ENCODE measurements at regions of chr12 and their contacts with region 1.

Region 1: GRCh38 chr12:92570056-92570753 is 132.6 kb upstream of the PLEKHG7 start:
- DNase-seq: peak; percentile 93
- ATAC-seq: peak; percentile 94
- H3K4me3 ChIP-seq: no peak overlapping the region
- H3K27ac ChIP-seq: peak overlapping the region; percentile 55
- H3K4me1 ChIP-seq: peaks cover 11% of the 10 kb centered on the region; the same call in 1 of the 2 replicates
- H3K27me3 ChIP-seq: no peaks in the 10 kb centered on the region
- CTCF ChIP-seq: peak; percentile 47 to 76 (median 48); a peak in 5 of 6 replicates
- EP300 ChIP-seq: no peak
- POLR2A ChIP-seq: no peak
- RAD21 ChIP-seq: peak; percentile 81

Region 2: GRCh38 chr12:91388552-91388965 is 1181.6 kb before region 1 on chr12:
- CTCF ChIA-PET with region 1: interaction called, 8 read pairs
- POLR2A ChIA-PET with region 1: no interaction called
- RAD21 ChIA-PET with region 1: interaction called, 3 read pairs
- SMC1A ChIA-PET with region 1: interaction called, 3 read pairs
- in situ Hi-C with region 1: loop called (anchors 5 kb)
- intact Hi-C with region 1: no loop called
- DNase-seq: no peak
- ATAC-seq: no peak
- H3K4me3 ChIP-seq: no peak overlapping the region
- H3K27ac ChIP-seq: no peak overlapping the region
- H3K4me1 ChIP-seq: no peaks in the 10 kb centered on the region
- H3K27me3 ChIP-seq: no peaks in the 10 kb centered on the region
- CTCF ChIP-seq: no peak
- EP300 ChIP-seq: no peak
- POLR2A ChIP-seq: no peak
- RAD21 ChIP-seq: no peak

Region 3: GRCh38 chr12:91991399-91992187 is 578.6 kb before region 1 on chr12:
- CTCF ChIA-PET with region 1: interaction called, 18 read pairs
- POLR2A ChIA-PET with region 1: interaction called, 3 read pairs
- RAD21 ChIA-PET with region 1: interaction called, 24 read pairs
- SMC1A ChIA-PET with region 1: interaction called, 7 read pairs
- in situ Hi-C with region 1: no loop called
- intact Hi-C with region 1: loop called (anchors 1 kb)
- DNase-seq: peak; percentile 32
- ATAC-seq: peak; percentile 94
- H3K4me3 ChIP-seq: no peak overlapping the region
- H3K27ac ChIP-seq: no peak overlapping the region
- H3K4me1 ChIP-seq: no peaks in the 10 kb centered on the region
- H3K27me3 ChIP-seq: no peaks in the 10 kb centered on the region
- CTCF ChIP-seq: peak in 2 of 3 experiments; percentile 35 to 56; a peak in 3 of 6 replicates
- EP300 ChIP-seq: no peak
- POLR2A ChIP-seq: no peak
- RAD21 ChIP-seq: peak; percentile 61

Region 4: DNA sequence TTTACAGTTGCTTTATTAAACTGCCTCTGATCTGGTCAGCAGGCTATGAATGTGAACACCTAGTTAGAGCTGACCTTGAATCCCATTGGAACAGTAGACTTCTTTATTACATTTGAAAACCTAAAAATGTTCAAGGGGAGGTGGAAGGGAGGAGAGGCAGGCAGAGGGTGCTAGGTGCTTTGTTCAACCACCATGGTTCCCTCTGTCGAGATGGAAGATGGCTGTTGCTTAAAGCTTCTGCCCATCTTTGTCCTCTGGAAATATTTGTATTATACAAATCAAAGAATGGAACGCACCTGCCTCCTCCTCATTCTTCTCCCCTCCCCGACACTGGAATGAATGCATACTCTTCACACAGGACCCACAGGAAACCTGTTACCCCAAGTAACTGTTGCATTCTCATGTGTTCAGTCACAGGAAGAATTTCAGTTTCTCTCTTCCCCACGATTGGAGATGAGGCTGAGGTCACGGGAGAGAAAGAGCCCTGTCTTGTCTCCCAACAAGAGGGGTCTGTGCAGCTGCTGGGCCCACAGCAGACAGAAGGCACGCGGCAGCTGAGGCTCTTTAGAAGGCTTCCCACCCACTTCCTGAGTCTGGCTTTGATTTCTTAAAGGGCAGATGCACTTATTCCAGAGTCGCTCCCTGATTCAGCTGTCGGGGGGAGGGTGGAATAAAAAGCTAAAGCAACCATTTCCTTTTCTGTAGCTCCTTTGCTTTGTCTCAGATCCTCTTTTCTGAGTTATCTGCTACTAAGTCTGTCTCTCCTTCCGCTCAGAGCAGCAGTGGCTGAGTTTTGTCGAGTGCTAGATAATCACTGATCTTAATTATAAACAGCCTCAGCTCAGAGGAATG is 206.7 kb before region 1 on chr12:
- CTCF ChIA-PET with region 1: interaction called, 4 read pairs
- POLR2A ChIA-PET with region 1: interaction called, 12 read pairs
- RAD21 ChIA-PET with region 1: interaction called, 27 read pairs
- SMC1A ChIA-PET with region 1: interaction called, 25 read pairs
- in situ Hi-C with region 1: no loop called
- intact Hi-C with region 1: loop called (anchors 1 kb)
- DNase-seq: peak; percentile 96
- ATAC-seq: peak; percentile 82
- H3K4me3 ChIP-seq: peak overlapping the region; percentile 62
- H3K27ac ChIP-seq: peak overlapping the region; percentile 99
- H3K4me1 ChIP-seq: peaks cover 17% of the 10 kb centered on the region; the same call in 1 of the 2 replicates
- H3K27me3 ChIP-seq: no peaks in the 10 kb centered on the region
- CTCF ChIP-seq: no peak
- EP300 ChIP-seq: peak; percentile 60 to 79; a peak in 3 of 4 replicates
- POLR2A ChIP-seq: peak; percentile 83
- RAD21 ChIP-seq: peak; percentile 12; the same call in 1 of the 2 replicates

Region 5: DNA sequence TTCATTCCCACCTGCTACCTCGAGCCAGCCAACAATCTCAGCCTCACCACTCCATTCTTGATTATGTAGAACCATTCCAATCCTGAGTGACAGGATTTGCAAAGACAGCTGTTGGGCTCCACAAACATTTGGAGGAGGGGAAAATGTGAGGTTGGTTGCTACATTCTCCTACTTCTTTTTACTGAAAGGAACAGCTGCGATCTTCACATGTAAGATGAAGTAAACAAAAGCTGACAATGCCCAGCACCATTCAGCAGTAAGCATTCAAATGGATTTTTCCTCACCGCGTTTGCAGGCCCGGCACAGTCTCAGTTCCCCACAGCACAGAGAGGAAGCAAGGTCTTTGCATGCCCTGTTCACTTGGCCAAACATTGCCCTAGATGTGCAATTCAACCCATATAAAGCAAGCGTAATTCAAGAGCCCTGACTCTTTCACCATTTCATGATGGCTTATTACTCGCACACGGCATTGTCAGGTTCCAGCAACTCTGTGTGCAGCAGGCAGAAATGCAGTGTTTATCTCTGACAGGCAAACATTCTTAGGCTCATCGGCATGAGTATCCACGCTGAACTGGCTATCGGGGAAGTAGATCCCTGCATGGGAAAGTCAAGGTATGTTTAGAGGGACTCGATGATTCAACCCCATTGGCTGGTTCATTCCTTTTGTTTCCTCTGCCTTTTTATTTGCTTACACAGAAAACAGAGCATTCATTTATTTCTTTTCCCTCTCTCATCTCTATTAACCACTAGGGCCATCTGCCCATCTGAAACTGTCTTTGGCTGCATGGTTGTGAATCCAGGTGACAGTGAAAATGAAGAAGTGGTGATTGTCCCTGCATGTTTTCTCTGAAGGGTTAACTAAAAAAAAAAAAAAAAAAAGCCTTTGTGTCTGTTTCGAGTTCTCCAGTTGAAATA is 103.6 kb before region 1 on chr12:
- CTCF ChIA-PET with region 1: interaction called, 10 read pairs
- POLR2A ChIA-PET with region 1: interaction called, 6 read pairs
- RAD21 ChIA-PET with region 1: interaction called, 38 read pairs
- SMC1A ChIA-PET with region 1: interaction called, 32 read pairs
- in situ Hi-C with region 1: loop called (anchors 25 kb)
- intact Hi-C with region 1: loop called (anchors 1 kb)
- DNase-seq: peak; percentile 90
- ATAC-seq: peak; percentile 39
- H3K4me3 ChIP-seq: peak overlapping the region; percentile 82
- H3K27ac ChIP-seq: peak overlapping the region; percentile 99
- H3K4me1 ChIP-seq: peaks cover 62% of the 10 kb centered on the region
- H3K27me3 ChIP-seq: no peaks in the 10 kb centered on the region
- CTCF ChIP-seq: no peak
- EP300 ChIP-seq: peak; percentile 65 to 70; a peak in 3 of 4 replicates
- POLR2A ChIP-seq: peak; percentile 85
- RAD21 ChIP-seq: peak; percentile 5

Region 6: GRCh38 chr12:92539113-92539749 is 31.0 kb before region 1 on chr12:
- CTCF ChIA-PET with region 1: interaction called, 5 read pairs
- POLR2A ChIA-PET with region 1: interaction called, 204 read pairs
- RAD21 ChIA-PET with region 1: interaction called, 269 read pairs
- SMC1A ChIA-PET with region 1: interaction called, 319 read pairs
- in situ Hi-C with region 1: no loop called
- intact Hi-C with region 1: no loop called
- DNase-seq: peak; percentile 93
- ATAC-seq: peak; percentile 54
- H3K4me3 ChIP-seq: no peak overlapping the region
- H3K27ac ChIP-seq: peak overlapping the region; percentile 99
- H3K4me1 ChIP-seq: peaks cover 72% of the 10 kb centered on the region
- H3K27me3 ChIP-seq: no peaks in the 10 kb centered on the region
- CTCF ChIP-seq: no peak
- EP300 ChIP-seq: peak; percentile 90 to 98
- POLR2A ChIP-seq: no peak
- RAD21 ChIP-seq: 0 out of 2 replicates have a peak, but pooled peaks have one; percentile 36

Region 7: GRCh38 chr12:92593734-92594402 is 23.7 kb after region 1 on chr12:
- CTCF ChIA-PET with region 1: interaction called, 11 read pairs
- POLR2A ChIA-PET with region 1: interaction called, 4 read pairs
- RAD21 ChIA-PET with region 1: interaction called, 4 read pairs
- SMC1A ChIA-PET with region 1: interaction called, 7 read pairs
- in situ Hi-C with region 1: no loop called
- intact Hi-C with region 1: no loop called
- DNase-seq: peak; percentile 96
- ATAC-seq: peak; percentile 99
- H3K4me3 ChIP-seq: no peak overlapping the region
- H3K27ac ChIP-seq: peak overlapping the region; percentile 58
- H3K4me1 ChIP-seq: peaks cover 15% of the 10 kb centered on the region
- H3K27me3 ChIP-seq: no peaks in the 10 kb centered on the region
- CTCF ChIP-seq: no peak
- EP300 ChIP-seq: peak; percentile 93 to 96; a peak in 3 of 4 replicates
- POLR2A ChIP-seq: peak; percentile 57; the same call in 1 of the 2 replicates
- RAD21 ChIP-seq: no peak